ENCODE measurements at regions of chr5 and their contacts with region 1.

Region 1: GRCh38 chr5:78677777-78678668 is 29.5 kb upstream of the LHFPL2 start:
- DNase-seq: no peak

Region 2: GRCh38 chr5:78280261-78280660 is 397.8 kb before region 1 on chr5:
- intact Hi-C with region 1: no loop called
- DNase-seq: no peak

Region 3: GRCh38 chr5:78809444-78809843 is 131.4 kb after region 1 on chr5:
- intact Hi-C with region 1: no loop called
- DNase-seq: no peak

Region 4: DNA sequence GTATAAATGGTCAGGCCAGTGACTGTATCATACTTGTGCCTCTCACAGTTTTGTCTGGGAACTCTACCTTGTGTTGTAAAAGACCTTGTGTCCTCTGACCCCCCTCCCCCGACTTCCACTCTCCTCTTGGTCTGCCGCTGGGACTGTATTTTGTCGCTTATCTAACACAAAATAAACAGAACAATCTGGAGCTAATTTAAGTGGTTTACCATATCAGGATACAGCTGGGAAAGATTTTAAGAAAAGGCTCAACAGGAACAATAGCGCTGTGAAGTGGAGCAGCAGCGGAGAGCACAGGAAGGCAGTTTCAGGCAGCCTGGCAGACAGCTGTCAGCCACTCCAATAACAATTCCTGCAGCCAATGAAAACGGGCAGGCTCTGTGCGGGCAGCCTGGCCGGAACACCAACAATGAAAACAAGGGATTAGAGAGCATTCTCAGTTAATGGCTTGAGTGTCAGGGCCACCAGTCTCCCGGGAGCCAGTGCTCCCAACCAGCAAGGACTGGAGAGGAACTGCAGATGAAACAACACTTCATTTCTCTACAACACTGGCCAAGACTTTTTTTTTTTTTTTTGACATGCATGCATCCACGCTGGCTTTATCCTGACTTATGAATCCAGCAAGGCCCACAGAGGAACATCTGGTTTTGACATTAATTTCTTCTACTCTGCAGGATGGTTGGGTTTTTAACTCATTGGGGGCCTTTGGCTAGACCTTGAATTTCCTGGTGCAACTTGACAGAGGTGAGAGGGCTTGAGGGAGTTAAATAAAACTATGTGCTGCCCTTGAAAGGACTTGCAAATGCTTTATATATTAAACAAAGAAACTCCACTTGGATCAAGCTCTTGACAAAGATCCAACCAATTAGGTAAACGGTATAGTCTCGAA is 230.4 kb after region 1 on chr5:
- intact Hi-C with region 1: loop called (anchors 2 kb)
- DNase-seq: peak; percentile 79